Astrocyte of the cerebellum (primary cell): ENCODE measurements at regions of chr17 and their contacts with region 1.

Region 1: DNA sequence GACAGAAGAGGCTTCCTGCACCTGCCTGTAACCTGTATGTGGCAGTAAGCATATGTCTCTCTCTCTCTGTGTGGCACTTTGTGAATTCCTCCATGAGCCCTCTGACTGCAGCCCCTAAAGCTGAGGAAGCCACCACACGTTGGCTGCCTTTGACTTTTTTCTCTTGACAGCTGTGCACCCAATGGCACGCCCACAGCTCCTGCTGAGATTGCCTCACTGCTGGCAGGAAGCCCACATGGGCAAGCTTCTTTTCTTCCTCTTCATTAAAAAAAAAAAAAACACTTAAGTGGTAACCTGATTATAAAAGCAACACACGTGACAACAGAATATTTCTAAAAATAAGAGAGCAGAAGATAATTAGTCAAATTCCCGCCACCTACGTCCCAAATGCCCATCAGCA is 34.0 kb upstream of the PIRT start:
- DNase-seq: no peak
- H3K4me3 ChIP-seq: no peak overlapping the region
- CTCF ChIP-seq: no peak

Region 2: GRCh38 chr17:10932938-10933337 is 61.0 kb after region 1 on chr17:
- in situ Hi-C with region 1: loop called (anchors 5 kb)
- DNase-seq: no peak
- H3K4me3 ChIP-seq: no peak overlapping the region
- CTCF ChIP-seq: no peak